Common myeloid progenitor, CD34-positive (primary cell): ENCODE measurements at regions of chr20 and their contacts with region 1.

Region 1: DNA sequence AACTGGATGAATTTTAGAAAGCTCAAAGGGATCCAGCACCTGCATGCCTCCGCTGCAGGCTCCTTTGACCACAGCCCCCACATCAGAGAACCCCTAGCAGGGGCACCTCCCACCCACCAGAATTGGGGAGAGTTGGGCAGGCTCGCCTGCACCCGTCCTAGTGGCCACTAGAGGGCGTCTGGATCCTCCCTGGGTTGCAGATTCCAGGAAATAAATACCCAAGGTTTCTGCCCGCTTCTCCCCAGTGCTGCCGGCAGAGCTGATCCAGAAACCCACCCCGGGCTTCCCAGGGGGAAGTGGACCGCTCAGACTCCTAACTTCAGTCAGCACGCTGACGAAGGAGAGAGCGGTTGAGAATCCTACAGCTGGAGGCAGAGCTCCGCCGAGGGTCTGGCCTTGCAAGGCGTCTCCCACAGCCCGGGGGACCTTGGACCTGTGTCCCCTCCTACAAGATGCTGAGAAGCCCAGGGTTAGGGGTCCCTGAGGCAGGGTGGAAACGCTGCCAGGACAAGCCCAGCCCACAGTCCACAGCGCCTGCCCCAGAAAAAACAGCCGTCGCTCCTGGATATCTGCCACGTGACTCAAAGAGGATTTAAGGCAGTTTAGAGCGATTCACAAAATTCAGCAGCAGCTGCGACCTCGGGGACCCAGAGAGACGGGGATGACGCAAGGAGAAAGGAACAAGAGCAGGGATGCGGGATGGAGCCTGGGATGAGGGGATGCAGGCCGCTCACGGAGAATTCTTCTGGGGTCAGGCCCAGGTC is 32.6 kb upstream of the PHACTR3 start:
- DNase-seq: peak; percentile 49 to 70 (median 66)
- H3K4me3 ChIP-seq: peak overlapping the region in 6 of 7 experiments; percentile 37 to 81 (median 62)
- H3K27ac ChIP-seq: no peak overlapping the region
- H3K4me1 ChIP-seq: peaks cover 0 to 6% (median 4%) of the 10 kb centered on the region in 4 experiments
- H3K27me3 ChIP-seq: peaks cover 0 to 54% (median 25%) of the 10 kb centered on the region in 5 experiments

Region 2: DNA sequence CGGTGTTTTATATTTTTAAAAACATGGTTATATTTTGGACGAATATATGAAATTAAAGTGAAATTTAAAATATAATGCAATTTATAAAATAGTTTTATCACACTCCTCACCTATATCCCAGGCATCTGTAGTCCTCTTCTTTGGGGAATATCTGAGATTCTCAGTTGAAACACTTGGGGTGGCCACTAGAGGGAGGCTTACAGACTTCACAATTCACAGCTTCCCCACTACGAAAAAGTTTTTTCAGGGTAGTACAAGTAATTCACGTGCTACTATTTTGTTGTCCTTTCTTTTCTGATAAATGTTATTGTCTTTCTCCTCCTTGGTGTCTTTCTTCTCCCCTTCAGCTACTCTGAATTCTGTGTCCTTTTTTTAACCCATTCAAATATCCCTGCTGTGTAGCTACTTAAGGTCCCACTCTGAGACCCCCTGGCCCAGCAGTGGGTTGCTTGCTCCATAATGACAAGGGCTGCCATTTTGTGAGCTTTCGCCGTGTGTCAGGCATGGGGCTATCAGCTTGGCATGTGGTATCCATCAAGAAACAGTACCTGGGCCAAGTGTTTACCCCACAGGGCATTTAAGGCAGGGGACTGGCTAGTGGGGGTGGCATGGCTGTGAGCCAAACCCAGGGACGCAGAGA is 11.0 kb before region 1 on chr20:
- CTCF ChIA-PET with region 1: interaction called, 20 read pairs
- POLR2A ChIA-PET with region 1: no interaction called
- DNase-seq: peak; percentile 30 to 61 (median 59)
- H3K4me3 ChIP-seq: no peak overlapping the region
- H3K27ac ChIP-seq: no peak overlapping the region
- H3K4me1 ChIP-seq: no peaks in the 10 kb centered on the region
- H3K27me3 ChIP-seq: peaks cover 0 to 14% (median 0%) of the 10 kb centered on the region in 5 experiments

Region 3: GRCh38 chr20:59583428-59584045 is 11.8 kb after region 1 on chr20:
- CTCF ChIA-PET with region 1: interaction called, 13 read pairs
- POLR2A ChIA-PET with region 1: no interaction called
- DNase-seq: no peak
- H3K4me3 ChIP-seq: no peak overlapping the region
- H3K27ac ChIP-seq: no peak overlapping the region
- H3K4me1 ChIP-seq: peaks cover 0 to 8% (median 1%) of the 10 kb centered on the region in 4 experiments
- H3K27me3 ChIP-seq: peaks cover 0 to 66% (median 4%) of the 10 kb centered on the region in 5 experiments

Region 4: DNA sequence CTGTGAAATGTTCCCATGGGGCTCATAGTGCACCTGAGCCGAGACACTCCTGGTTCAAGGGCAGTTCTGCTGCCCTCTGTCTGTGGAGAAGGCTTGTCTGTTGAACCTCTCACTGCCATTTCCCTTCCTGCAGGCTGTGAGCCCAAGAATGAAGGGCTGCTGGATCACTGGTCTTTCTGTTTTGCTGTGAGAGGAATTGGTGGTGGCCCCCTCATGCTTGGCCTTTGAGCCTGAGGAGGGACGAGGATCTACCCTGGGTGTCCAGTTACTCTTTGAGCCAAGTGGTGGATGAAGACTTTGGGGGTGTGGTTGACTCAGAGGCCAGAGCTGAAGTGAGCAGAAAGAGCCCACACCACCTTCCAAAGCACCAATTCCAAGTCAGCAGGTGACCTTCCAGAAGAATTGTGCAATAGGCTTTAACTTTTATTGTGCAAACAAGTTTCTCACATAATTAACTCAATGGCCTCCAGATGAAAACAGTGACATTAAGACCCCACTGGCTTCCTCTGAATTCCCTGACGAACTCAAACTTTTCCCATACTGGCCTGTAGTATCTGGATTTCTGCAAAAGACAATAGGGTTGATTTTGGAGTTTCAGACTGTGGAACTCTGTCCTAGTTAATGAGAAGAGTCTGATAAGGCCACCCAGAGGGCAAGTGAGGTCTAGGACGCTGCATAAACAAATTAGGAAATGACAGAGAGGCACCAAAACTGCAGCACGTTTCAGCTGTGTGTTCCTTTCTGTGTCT is 134.1 kb after region 1 on chr20:
- CTCF ChIA-PET with region 1: no interaction called
- POLR2A ChIA-PET with region 1: no interaction called
- DNase-seq: no peak
- H3K4me3 ChIP-seq: no peak overlapping the region
- H3K27ac ChIP-seq: no peak overlapping the region
- H3K4me1 ChIP-seq: no peaks in the 10 kb centered on the region
- H3K27me3 ChIP-seq: peaks cover 0 to 38% (median 5%) of the 10 kb centered on the region in 5 experiments